B cell (primary cell): ENCODE measurements at regions of chr19 and their contacts with region 1.

Region 1: DNA sequence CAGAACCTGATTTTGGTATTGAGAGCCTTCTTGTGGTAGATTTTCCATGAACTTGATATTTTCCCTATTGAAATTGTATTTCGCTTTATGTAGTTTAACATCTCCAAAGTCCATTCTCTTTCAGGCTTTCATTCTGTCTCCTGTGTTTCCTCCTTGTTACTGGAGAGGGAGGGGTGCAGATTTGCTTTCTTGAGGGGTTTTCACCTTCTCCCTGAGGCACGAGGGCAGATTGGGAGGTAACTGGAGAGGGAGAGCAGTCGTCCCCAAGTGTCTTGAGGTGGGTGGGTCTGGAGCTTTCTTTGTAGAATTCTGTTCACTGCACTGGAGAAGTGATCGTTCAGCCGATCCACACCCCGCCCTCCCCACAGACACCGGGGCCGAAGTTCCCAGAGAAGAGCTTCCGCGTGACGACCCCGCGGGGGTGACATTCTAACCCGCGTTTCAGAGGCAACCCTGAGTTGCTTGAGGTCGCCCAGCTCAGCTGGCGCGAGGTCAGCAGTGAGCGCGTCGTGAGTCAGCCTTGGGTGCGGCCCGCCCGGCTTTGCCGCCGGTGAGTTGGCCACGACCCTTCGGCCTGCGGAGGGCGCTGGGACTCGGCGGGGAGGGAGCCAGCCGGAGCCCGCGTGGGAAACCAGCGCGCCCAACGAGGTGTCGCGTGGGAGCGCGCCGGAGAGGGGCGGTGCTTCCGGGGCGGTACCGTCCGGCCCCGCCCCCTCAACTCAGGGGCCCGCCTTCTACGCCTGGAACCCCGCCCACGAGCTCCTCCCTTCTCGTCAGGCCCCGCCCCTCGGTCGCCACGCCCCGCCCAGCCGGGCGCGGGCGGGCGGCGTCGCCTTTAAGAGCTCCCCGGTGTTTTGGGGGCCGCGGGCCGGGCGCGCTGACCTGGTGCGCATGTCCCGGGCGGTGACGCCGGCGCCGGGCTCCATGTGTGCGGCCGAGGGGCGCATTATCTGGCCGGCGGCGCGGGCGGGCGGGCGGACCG is at the start of gene GATAD2A:
- DNase-seq: peak; percentile 96
- ATAC-seq: peak; percentile 88
- H3K4me3 ChIP-seq: peak within 1 kb of the TSS; percentile 55 to 86 (median 70)
- H3K4me3 Mint-ChIP-seq: peak within 1 kb of the TSS; percentile 91
- H3K27ac ChIP-seq: peak within 1 kb of the TSS; percentile 55 to 77
- H3K27ac Mint-ChIP-seq: peak within 1 kb of the TSS; percentile 92
- H3K4me1 ChIP-seq: peaks cover 32 to 37% of the 10 kb centered on the region in 2 donors
- H3K4me1 Mint-ChIP-seq: peaks cover 39% of the 10 kb centered on the region
- H3K27me3 ChIP-seq: no peaks in the 10 kb centered on the region
- H3K27me3 Mint-ChIP-seq: no peaks in the 10 kb centered on the region
- CTCF ChIP-seq: peak; percentile 38
- total RNA-seq, gene GATAD2A: 76.3 and 97.3 TPM in 2 replicates

Region 2: GRCh38 chr19:19320362-19321142 is 84.6 kb before region 1 on chr19 and contains the starts of genes MAU2 and SUGP1:
- CTCF ChIA-PET with region 1: no interaction called
- POLR2A ChIA-PET with region 1: no interaction called
- intact Hi-C with region 1: loop called (anchors 1 kb)
- DNase-seq: peak; percentile 95
- ATAC-seq: peak; percentile 91
- H3K4me3 ChIP-seq: peak within 1 kb of the TSS; percentile 73 to 97 (median 79)
- H3K4me3 Mint-ChIP-seq: peak within 1 kb of the TSS; percentile 96
- H3K27ac ChIP-seq: peak within 1 kb of the TSS; percentile 96
- H3K27ac Mint-ChIP-seq: peak within 1 kb of the TSS; percentile 99
- H3K4me1 ChIP-seq: peaks cover 18 to 31% of the 10 kb centered on the region in 2 donors
- H3K4me1 Mint-ChIP-seq: peaks cover 44% of the 10 kb centered on the region
- H3K27me3 ChIP-seq: no peaks in the 10 kb centered on the region
- H3K27me3 Mint-ChIP-seq: no peaks in the 10 kb centered on the region
- CTCF ChIP-seq: peak; percentile 26
- total RNA-seq, gene MAU2: 199 and 203 TPM in 2 replicates
- total RNA-seq, gene SUGP1: 86.9 and 91.4 TPM in 2 replicates

Region 3: GRCh38 chr19:19366612-19367396 is 38.4 kb before region 1 on chr19:
- CTCF ChIA-PET with region 1: interaction called, 19 read pairs
- POLR2A ChIA-PET with region 1: interaction called, 8 read pairs
- intact Hi-C with region 1: loop called (anchors 1 kb)
- DNase-seq: peak; percentile 81
- ATAC-seq: peak; percentile 82
- H3K4me3 ChIP-seq: no peak overlapping the region
- H3K4me3 Mint-ChIP-seq: peak overlapping the region; percentile 42
- H3K27ac ChIP-seq: no peak overlapping the region
- H3K27ac Mint-ChIP-seq: peak overlapping the region; percentile 86
- H3K4me1 ChIP-seq: peaks cover 10 to 23% of the 10 kb centered on the region in 2 donors
- H3K4me1 Mint-ChIP-seq: peaks cover 15% of the 10 kb centered on the region
- H3K27me3 ChIP-seq: no peaks in the 10 kb centered on the region
- H3K27me3 Mint-ChIP-seq: no peaks in the 10 kb centered on the region
- CTCF ChIP-seq: peak; percentile 92

Region 4: DNA sequence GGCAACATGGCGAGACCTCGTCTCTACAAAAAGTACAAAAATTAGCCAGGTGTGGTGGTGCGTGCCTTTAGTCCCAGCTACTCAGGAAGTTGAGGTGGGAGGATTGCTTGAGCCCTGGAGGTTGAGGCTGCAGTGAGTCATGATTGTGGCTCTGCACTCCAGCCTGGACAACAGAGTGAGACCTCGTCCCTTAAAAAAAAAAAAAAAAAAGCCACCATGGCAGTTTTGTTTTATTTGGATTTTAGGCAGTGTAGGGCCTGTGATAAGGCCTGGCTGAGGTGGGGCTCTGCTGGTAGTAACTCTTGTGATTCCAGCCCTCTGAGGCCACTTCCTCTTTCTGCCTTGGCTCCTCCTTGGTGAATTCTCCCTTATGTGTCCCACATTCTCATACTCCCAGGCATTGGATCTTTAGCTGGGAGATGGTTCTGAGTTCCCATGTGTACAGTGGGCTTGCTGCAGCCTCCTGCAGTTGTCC is 39.5 kb after region 1 on chr19:
- CTCF ChIA-PET with region 1: interaction called, 4 read pairs
- POLR2A ChIA-PET with region 1: no interaction called
- intact Hi-C with region 1: loop called (anchors 5 kb)
- DNase-seq: peak; percentile 69
- ATAC-seq: peak; percentile 70
- H3K4me3 ChIP-seq: peak overlapping the region in 1 of 5 experiments; percentile 21
- H3K4me3 Mint-ChIP-seq: peak overlapping the region; percentile 81
- H3K27ac ChIP-seq: peak overlapping the region; percentile 69 to 73
- H3K27ac Mint-ChIP-seq: peak overlapping the region; percentile 92
- H3K4me1 ChIP-seq: peaks cover 35 to 47% of the 10 kb centered on the region in 2 donors
- H3K4me1 Mint-ChIP-seq: peaks cover 61% of the 10 kb centered on the region
- H3K27me3 ChIP-seq: no peaks in the 10 kb centered on the region
- H3K27me3 Mint-ChIP-seq: no peaks in the 10 kb centered on the region
- CTCF ChIP-seq: no peak

Region 5: GRCh38 chr19:19515764-19516519 is 110.8 kb after region 1 on chr19 and contains the start of gene NDUFA13:
- CTCF ChIA-PET with region 1: no interaction called
- POLR2A ChIA-PET with region 1: interaction called, 4 read pairs
- intact Hi-C with region 1: loop called (anchors 1 kb)
- DNase-seq: peak; percentile 96
- ATAC-seq: peak; percentile 94
- H3K4me3 ChIP-seq: peak within 1 kb of the TSS; percentile 82 to 99 (median 95)
- H3K4me3 Mint-ChIP-seq: peak within 1 kb of the TSS; percentile 93
- H3K27ac ChIP-seq: peak within 1 kb of the TSS; percentile 72 to 81
- H3K27ac Mint-ChIP-seq: peak within 1 kb of the TSS; percentile 92
- H3K4me1 ChIP-seq: peaks cover 12 to 23% of the 10 kb centered on the region in 2 donors
- H3K4me1 Mint-ChIP-seq: peaks cover 27% of the 10 kb centered on the region
- H3K27me3 ChIP-seq: no peaks in the 10 kb centered on the region
- H3K27me3 Mint-ChIP-seq: no peaks in the 10 kb centered on the region
- CTCF ChIP-seq: no peak
- total RNA-seq, gene NDUFA13: 170 and 188 TPM in 2 replicates